Prostate gland (tissue), 2 donors: ENCODE measurements at regions of chr9 and their contacts with region 1.

Region 1: GRCh38 chr9:69332067-69332685 is 7.2 kb downstream of the ENTREP1 start:
- DNase-seq: no peak
- H3K4me3 ChIP-seq: no peak overlapping the region
- H3K27ac ChIP-seq: peak overlapping the region; percentile 9 to 44
- H3K4me1 ChIP-seq: peaks cover 4% of the 10 kb centered on the region
- H3K27me3 ChIP-seq: no peaks in the 10 kb centered on the region
- CTCF ChIP-seq: no peak
- POLR2A ChIP-seq: no peak

Region 2: DNA sequence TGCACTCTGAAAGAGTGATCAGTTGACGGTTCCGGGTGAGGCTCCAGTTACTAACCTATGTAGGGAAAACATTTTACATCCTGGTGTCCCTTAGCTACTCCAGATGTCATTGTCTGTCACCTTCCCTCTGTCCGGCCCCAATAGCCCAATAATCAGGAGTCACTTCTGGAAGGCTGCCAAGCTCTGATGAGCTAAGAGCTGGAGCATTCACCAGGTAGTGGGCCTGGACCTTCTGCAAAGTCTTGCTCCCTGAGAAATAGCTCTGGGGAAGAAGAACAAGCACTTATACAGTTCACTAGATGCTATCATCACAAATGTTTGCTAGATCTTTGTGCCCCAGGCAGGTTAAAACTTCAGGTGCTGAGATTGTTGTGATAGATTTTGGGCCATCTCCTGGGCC is 57.3 kb after region 1 on chr9:
- intact Hi-C with region 1: loop called (anchors 2 kb)
- DNase-seq: no peak
- H3K4me3 ChIP-seq: no peak overlapping the region
- H3K27ac ChIP-seq: no peak overlapping the region
- H3K4me1 ChIP-seq: no peaks in the 10 kb centered on the region
- H3K27me3 ChIP-seq: no peaks in the 10 kb centered on the region
- CTCF ChIP-seq: no peak
- POLR2A ChIP-seq: no peak